IMR-90 (cell line): ENCODE measurements at regions of chr7 and their contacts with region 1.

Region 1: DNA sequence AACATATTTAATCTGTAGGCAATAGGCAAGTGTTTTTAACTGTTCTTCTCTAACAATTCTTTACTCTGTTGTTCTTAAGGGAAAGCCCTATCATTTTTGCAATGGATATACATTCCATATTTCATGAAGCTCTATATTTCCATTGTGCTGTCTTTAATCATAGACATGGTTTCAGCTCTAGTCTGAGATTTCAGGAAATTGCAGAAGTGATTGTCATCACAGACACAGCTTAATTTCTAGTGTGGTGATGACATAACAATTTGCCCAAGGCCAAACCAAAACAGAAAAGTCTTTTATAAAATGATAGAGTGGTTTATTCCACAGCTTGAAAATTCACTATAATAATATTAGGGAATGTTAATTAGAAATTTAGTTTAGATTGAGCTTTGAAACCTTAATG is 494.1 kb upstream of the SEMA3A start:
- DNase-seq: peak; percentile 50
- ATAC-seq: no peak
- H3K4me3 ChIP-seq: no peak overlapping the region
- H3K27ac ChIP-seq: no peak overlapping the region
- H3K4me1 ChIP-seq: no peaks in the 10 kb centered on the region
- H3K27me3 ChIP-seq: no peaks in the 10 kb centered on the region
- CTCF ChIP-seq: no peak
- POLR2A ChIP-seq: no peak
- RAD21 ChIP-seq: no peak

Region 2: DNA sequence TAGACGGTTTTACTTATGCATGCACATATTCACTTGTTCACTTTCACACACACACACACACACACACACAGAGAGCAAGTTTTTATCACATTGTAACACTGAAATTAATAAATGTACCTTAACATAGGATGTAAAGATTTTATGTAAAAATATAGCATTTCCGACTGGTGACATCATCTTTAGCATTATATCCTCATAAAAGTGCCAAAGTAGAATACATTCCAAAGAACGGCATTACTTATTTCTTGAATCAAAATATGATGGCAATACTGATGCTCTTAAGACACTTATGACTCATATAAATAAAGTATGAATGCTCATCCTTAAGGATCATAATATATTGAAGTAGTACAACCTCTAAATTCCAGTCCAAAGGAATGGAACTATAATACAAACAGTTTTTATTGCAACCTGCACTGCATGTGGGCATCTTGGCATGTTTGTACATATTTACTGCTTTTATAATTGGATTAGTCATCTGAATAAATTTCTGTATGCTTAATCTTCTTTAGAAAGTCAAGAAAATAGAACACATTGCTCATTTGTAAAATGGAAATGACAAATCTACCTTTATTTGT is 204.1 kb before region 1 on chr7:
- CTCF ChIA-PET with region 1: no interaction called
- POLR2A ChIA-PET with region 1: no interaction called
- dilution Hi-C with region 1: no loop called
- in situ Hi-C with region 1: no loop called
- intact Hi-C with region 1: no loop called
- DNase-seq: peak; percentile 31
- ATAC-seq: peak; percentile 69
- H3K4me3 ChIP-seq: no peak overlapping the region
- H3K27ac ChIP-seq: no peak overlapping the region
- H3K4me1 ChIP-seq: no peaks in the 10 kb centered on the region
- H3K27me3 ChIP-seq: no peaks in the 10 kb centered on the region
- CTCF ChIP-seq: no peak
- POLR2A ChIP-seq: no peak
- RAD21 ChIP-seq: no peak

Region 3: GRCh38 chr7:84510505-84510904 is 178.2 kb before region 1 on chr7:
- CTCF ChIA-PET with region 1: no interaction called
- POLR2A ChIA-PET with region 1: no interaction called
- dilution Hi-C with region 1: no loop called
- in situ Hi-C with region 1: no loop called
- intact Hi-C with region 1: no loop called
- DNase-seq: peak; percentile 78
- ATAC-seq: peak; percentile 63
- H3K4me3 ChIP-seq: no peak overlapping the region
- H3K27ac ChIP-seq: 0 out of 2 replicates have a peak overlapping the region, but pooled peaks have one; percentile 11
- H3K4me1 ChIP-seq: peaks cover 9% of the 10 kb centered on the region
- H3K27me3 ChIP-seq: no peaks in the 10 kb centered on the region
- CTCF ChIP-seq: no peak
- POLR2A ChIP-seq: no peak
- RAD21 ChIP-seq: no peak

Region 4: DNA sequence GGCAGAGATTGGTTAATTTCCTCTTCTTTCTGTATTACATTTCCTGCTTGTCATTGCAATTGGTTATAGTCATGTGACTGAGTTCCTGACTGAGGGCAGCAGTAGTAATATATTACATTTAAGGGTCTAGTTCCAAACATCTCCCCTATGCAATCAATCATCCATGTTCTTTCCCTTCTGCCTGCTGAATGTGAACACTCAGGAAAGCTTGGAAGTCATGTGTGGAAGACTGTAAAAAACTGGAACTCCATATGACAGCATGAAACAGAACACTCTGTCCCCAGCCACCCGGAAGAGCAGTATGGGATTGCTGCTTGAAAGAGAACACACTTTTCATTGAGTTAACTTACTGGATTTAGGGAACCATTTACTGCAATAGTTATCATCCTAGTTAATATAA is 34.4 kb before region 1 on chr7:
- CTCF ChIA-PET with region 1: no interaction called
- POLR2A ChIA-PET with region 1: no interaction called
- dilution Hi-C with region 1: no loop called
- in situ Hi-C with region 1: no loop called
- intact Hi-C with region 1: loop called (anchors 5 kb)
- DNase-seq: no peak
- ATAC-seq: no peak
- H3K4me3 ChIP-seq: no peak overlapping the region
- H3K27ac ChIP-seq: no peak overlapping the region
- H3K4me1 ChIP-seq: peaks cover 2% of the 10 kb centered on the region; the same call in 1 of the 2 replicates
- H3K27me3 ChIP-seq: no peaks in the 10 kb centered on the region
- CTCF ChIP-seq: no peak
- POLR2A ChIP-seq: no peak
- RAD21 ChIP-seq: no peak

Region 5: DNA sequence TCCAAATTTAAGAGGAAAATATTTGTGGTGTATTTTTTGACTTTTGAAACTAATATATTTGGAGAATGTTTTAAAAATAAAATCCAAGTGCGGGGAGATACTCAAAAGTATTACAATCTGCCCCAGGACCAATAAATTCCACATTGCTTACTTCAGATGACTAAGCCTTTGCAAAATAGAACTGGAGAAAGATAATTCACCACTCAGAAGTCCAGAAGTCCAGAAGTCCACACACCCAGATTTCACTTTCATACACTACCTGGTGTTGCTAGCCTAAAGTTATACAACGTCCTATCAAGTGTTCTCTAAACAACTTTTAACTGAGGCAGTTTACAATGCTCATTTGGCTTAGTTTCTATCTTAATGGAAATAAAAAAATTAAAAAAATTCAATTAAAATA is 985.2 kb after region 1 on chr7:
- CTCF ChIA-PET with region 1: no interaction called
- POLR2A ChIA-PET with region 1: no interaction called
- dilution Hi-C with region 1: no loop called
- in situ Hi-C with region 1: no loop called
- intact Hi-C with region 1: no loop called
- DNase-seq: no peak
- ATAC-seq: no peak
- H3K4me3 ChIP-seq: no peak overlapping the region
- H3K27ac ChIP-seq: no peak overlapping the region
- H3K4me1 ChIP-seq: no peaks in the 10 kb centered on the region
- H3K27me3 ChIP-seq: no peaks in the 10 kb centered on the region; the same call in 1 of the 2 replicates
- CTCF ChIP-seq: no peak
- POLR2A ChIP-seq: no peak
- RAD21 ChIP-seq: no peak